ENCODE measurements at regions of chr22 and their contacts with region 1.

Region 1: GRCh38 chr22:23841736-23842445 is 3.1 kb upstream of the DERL3 start:
- DNase-seq: no peak
- H3K4me3 ChIP-seq: no peak overlapping the region
- H3K27ac ChIP-seq: no peak overlapping the region
- H3K4me1 ChIP-seq: peaks cover 20 to 42% of the 10 kb centered on the region in 2 donors
- H3K27me3 ChIP-seq: no peaks in the 10 kb centered on the region
- CTCF ChIP-seq: no peak
- POLR2A ChIP-seq: no peak

Region 2: GRCh38 chr22:23786752-23787599 is 54.9 kb before region 1 on chr22 and contains the start of gene SMARCB1:
- intact Hi-C with region 1: loop called (anchors 5 kb)
- DNase-seq: peak; percentile 91 to 92
- H3K4me3 ChIP-seq: peak within 1 kb of the TSS; percentile 47 to 94 (median 52)
- H3K27ac ChIP-seq: peak within 1 kb of the TSS; percentile 96 to 100 (median 97)
- H3K4me1 ChIP-seq: peaks cover 21% of the 10 kb centered on the region in 2 donors
- H3K27me3 ChIP-seq: no peaks in the 10 kb centered on the region
- CTCF ChIP-seq: no peak
- POLR2A ChIP-seq: peak; percentile 12 to 76
- total RNA-seq, gene SMARCB1: 59.8 to 107 (median 75.4) TPM

Measured in thyroid gland (tissue), 4 donors.